ENCODE measurements at regions of chr17 and their contacts with region 1.

Region 1: GRCh38 chr17:36755586-36755985 is 154.2 kb downstream of the MRM1 start:
- DNase-seq: peak; percentile 57
- ATAC-seq: peak; percentile 47
- H3K4me3 Mint-ChIP-seq: no peak overlapping the region
- H3K27ac Mint-ChIP-seq: no peak overlapping the region
- H3K4me1 Mint-ChIP-seq: no peaks in the 10 kb centered on the region
- H3K27me3 Mint-ChIP-seq: peaks cover 3% of the 10 kb centered on the region

Region 2: GRCh38 chr17:36629252-36629847 is 126.2 kb before region 1 on chr17:
- CTCF ChIA-PET with region 1: interaction called, 11 read pairs
- POLR2A ChIA-PET with region 1: no interaction called
- DNase-seq: peak; percentile 83
- ATAC-seq: peak; percentile 83
- H3K4me3 Mint-ChIP-seq: no peak overlapping the region
- H3K27ac Mint-ChIP-seq: no peak overlapping the region
- H3K4me1 Mint-ChIP-seq: no peaks in the 10 kb centered on the region
- H3K27me3 Mint-ChIP-seq: peaks cover 14% of the 10 kb centered on the region

Region 3: DNA sequence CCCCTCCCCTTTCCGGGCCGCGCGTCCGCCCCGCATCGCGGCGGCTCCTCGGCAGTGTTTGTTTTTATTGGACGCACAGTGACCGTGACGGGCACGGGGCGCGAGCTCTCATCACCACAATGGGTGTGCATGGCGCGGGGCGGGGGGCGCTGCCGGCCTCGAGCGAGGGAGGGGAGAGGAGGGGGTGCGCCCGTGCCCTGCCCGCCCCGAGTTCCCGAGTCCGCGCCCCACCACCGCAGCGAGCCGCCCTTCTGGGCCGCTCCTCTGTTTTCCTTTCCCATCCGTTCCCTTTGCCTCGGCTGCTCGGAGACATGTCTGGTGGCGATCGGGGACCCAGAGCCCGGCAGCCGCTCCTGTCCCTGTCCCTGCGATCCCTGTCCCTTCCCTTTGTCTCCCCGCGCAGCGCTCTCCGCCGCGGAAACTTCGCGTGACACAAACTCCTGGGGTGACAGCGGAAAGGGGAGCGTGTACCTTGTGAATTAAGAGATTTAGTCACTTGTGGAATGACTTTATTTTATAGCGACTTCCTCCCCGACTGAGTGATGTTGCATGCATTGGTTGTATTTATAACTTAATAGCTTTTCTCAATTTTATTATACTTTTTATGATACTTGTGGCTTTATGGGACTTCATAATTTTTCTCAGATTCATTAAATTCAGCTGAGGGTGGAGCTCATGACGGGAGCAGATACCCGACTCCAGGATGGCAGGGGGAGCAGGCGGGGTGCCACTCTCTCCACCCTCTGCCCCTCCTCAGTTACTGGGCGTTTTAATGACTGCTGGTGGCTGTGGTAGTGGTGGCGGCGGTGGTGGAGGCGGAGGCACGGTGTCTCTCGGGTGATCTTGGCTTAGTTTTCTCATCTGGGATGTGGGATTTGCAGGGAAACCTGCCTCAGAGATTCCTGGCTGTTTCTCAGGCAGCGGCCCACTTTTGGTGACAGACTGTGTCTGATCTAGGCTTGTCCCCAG is 113.4 kb before region 1 on chr17:
- CTCF ChIA-PET with region 1: no interaction called
- POLR2A ChIA-PET with region 1: no interaction called
- DNase-seq: no peak
- ATAC-seq: peak; percentile 36
- H3K4me3 Mint-ChIP-seq: peak overlapping the region; percentile 68
- H3K27ac Mint-ChIP-seq: peak overlapping the region; percentile 56
- H3K4me1 Mint-ChIP-seq: peaks cover 16% of the 10 kb centered on the region
- H3K27me3 Mint-ChIP-seq: peaks cover 62% of the 10 kb centered on the region

Region 4: GRCh38 chr17:36937966-36938565 is 182.5 kb after region 1 on chr17:
- CTCF ChIA-PET with region 1: no interaction called
- POLR2A ChIA-PET with region 1: no interaction called
- DNase-seq: no peak
- ATAC-seq: no peak
- H3K4me3 Mint-ChIP-seq: peak overlapping the region; percentile 56
- H3K27ac Mint-ChIP-seq: peak overlapping the region; percentile 57
- H3K4me1 Mint-ChIP-seq: peaks cover 66% of the 10 kb centered on the region
- H3K27me3 Mint-ChIP-seq: peaks cover 80% of the 10 kb centered on the region

Measured in activated CD8-positive, alpha-beta T cell treated with anti-CD3 and anti-CD28 coated beads, Interleukin-2, amount 10 ng/mL, durations not matched to agents 7 days and 5 days (primary cell).